Caco-2 (cell line): ENCODE measurements at regions of chr6 and their contacts with region 1.

Region 1: DNA sequence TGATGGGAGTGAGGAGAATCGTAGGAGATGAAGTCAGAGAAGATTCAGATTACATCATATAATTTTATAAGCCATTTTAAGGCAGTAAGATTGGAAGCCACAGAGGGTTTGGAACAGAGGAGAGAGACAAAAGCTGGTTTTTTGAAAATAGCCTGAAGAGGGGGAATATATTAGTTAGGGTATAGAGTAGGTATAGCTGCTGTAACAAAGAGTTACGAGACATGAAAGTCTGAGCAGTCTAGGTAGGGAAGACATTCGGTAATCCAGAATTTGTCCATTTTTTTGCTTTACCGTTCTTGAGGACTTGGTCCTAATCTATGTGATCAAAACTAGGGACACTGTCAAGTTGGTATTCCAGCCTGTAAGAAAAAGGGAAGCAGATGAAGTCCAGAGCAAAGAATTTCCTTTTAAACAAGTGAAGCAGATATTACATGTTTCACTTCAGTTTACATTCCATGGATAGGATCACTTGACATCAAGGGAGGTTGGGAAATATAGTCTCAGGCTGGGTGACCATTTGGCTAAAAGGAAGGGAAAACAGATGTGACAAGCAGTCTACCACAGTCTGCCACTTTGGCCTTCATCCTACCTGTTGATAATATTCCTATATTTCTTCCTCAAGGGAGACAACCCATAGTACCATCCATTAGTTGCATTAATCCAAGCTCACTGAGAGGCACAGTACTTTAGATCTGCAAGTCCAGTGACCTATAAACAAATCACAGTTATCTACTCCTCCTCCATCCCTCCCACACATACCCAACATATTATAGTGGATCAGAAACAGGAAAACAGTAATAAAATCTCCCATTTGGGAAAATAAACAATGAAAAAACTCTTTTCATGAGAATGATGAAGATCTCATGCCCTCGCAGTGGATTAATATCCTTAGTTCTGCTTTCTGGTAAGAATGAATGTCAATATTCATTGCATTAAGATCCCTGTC is 10.2 kb downstream of the FAM135A start:
- DNase-seq: no peak
- H3K4me3 ChIP-seq: no peak overlapping the region
- H3K4me3 Mint-ChIP-seq: no peak overlapping the region
- H3K27ac Mint-ChIP-seq: no peak overlapping the region
- H3K4me1 ChIP-seq: peaks cover 6% of the 10 kb centered on the region
- H3K4me1 Mint-ChIP-seq: no peaks in the 10 kb centered on the region
- H3K27me3 ChIP-seq: no peaks in the 10 kb centered on the region
- H3K27me3 Mint-ChIP-seq: no peaks in the 10 kb centered on the region
- CTCF ChIP-seq: no peak

Region 2: GRCh38 chr6:70142034-70142433 is 281.4 kb before region 1 on chr6:
- CTCF ChIA-PET with region 1: no interaction called
- POLR2A ChIA-PET with region 1: no interaction called
- intact Hi-C with region 1: no loop called
- DNase-seq: no peak
- H3K4me3 ChIP-seq: no peak overlapping the region
- H3K4me3 Mint-ChIP-seq: no peak overlapping the region
- H3K27ac Mint-ChIP-seq: no peak overlapping the region
- H3K4me1 ChIP-seq: no peaks in the 10 kb centered on the region
- H3K4me1 Mint-ChIP-seq: no peaks in the 10 kb centered on the region
- H3K27me3 ChIP-seq: no peaks in the 10 kb centered on the region
- H3K27me3 Mint-ChIP-seq: no peaks in the 10 kb centered on the region
- CTCF ChIP-seq: no peak

Region 3: GRCh38 chr6:70398783-70399728 is 24.4 kb before region 1 on chr6:
- CTCF ChIA-PET with region 1: no interaction called
- POLR2A ChIA-PET with region 1: no interaction called
- intact Hi-C with region 1: loop called (anchors 1 kb)
- DNase-seq: peak; percentile 63 to 74
- H3K4me3 ChIP-seq: no peak overlapping the region
- H3K4me3 Mint-ChIP-seq: peak overlapping the region; percentile 60
- H3K27ac Mint-ChIP-seq: peak overlapping the region; percentile 71
- H3K4me1 ChIP-seq: peaks cover 22% of the 10 kb centered on the region
- H3K4me1 Mint-ChIP-seq: peaks cover 25% of the 10 kb centered on the region
- H3K27me3 ChIP-seq: no peaks in the 10 kb centered on the region
- H3K27me3 Mint-ChIP-seq: no peaks in the 10 kb centered on the region
- CTCF ChIP-seq: no peak

Region 4: GRCh38 chr6:70474751-70475150 is 51.3 kb after region 1 on chr6:
- CTCF ChIA-PET with region 1: no interaction called
- POLR2A ChIA-PET with region 1: no interaction called
- intact Hi-C with region 1: no loop called
- DNase-seq: peak in 1 of 2 experiments; percentile 2
- H3K4me3 ChIP-seq: no peak overlapping the region
- H3K4me3 Mint-ChIP-seq: no peak overlapping the region
- H3K27ac Mint-ChIP-seq: no peak overlapping the region
- H3K4me1 ChIP-seq: no peaks in the 10 kb centered on the region
- H3K4me1 Mint-ChIP-seq: peaks cover 13% of the 10 kb centered on the region
- H3K27me3 ChIP-seq: no peaks in the 10 kb centered on the region
- H3K27me3 Mint-ChIP-seq: no peaks in the 10 kb centered on the region
- CTCF ChIP-seq: no peak

Region 5: DNA sequence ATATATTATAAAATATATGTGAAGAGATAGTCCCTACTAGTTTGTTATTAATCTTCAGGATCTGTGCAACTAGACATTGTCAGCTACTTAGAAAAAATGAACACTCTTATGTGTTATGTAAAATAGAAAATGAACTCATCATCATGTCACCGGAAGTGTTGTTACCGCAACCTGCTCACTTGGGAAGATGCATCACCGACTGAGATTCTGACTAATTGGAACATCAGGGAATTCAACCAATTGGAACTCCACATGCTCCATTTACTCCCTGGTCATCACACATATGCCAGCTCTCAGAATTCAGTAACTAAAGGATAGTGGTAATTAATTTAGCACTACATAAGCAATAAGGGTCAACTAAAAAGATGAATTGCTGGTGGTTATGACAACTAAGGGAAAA is 550.1 kb after region 1 on chr6:
- CTCF ChIA-PET with region 1: no interaction called
- POLR2A ChIA-PET with region 1: no interaction called
- intact Hi-C with region 1: no loop called
- DNase-seq: no peak
- H3K4me3 ChIP-seq: no peak overlapping the region
- H3K4me3 Mint-ChIP-seq: no peak overlapping the region
- H3K27ac Mint-ChIP-seq: no peak overlapping the region
- H3K4me1 ChIP-seq: no peaks in the 10 kb centered on the region
- H3K4me1 Mint-ChIP-seq: no peaks in the 10 kb centered on the region
- H3K27me3 ChIP-seq: no peaks in the 10 kb centered on the region
- H3K27me3 Mint-ChIP-seq: peaks cover 22% of the 10 kb centered on the region
- CTCF ChIP-seq: no peak